ENCODE measurements at regions of chr10 and their contacts with region 1.

Region 1: DNA sequence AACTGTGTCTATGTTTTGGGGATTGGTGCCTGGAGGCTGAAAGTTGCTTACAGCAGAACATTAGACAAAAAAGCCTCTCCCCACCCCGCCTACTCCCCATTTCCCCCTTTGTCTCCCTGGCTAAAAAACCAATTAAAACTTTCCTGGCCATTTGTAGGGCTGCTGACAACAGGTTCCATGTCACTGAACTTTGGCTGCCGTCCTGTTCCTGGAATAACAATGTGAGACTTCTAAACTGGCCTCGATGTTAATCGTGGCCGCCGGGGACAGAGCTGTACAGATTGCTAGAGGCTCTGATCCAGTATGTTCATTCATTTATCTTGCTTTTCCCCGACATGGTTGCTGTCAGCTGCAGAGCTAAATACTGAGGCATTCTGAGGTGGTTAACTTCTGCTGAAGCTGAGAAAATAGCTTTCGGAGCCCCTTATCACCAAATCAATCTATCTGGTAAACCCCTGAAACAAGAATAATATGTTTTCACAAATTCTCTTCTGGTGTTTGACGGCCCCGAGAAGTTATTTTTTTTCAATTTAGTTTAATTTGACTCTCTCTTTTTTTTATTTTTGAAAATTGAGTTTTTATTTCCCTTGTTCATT is 271.6 kb downstream of the GFRA1 start:
- DNase-seq: peak in 1 of 2 donors; percentile 21
- H3K4me3 ChIP-seq: no peak overlapping the region
- H3K27ac ChIP-seq: no peak overlapping the region
- H3K4me1 ChIP-seq: no peaks in the 10 kb centered on the region
- H3K27me3 ChIP-seq: no peaks in the 10 kb centered on the region
- CTCF ChIP-seq: no peak
- POLR2A ChIP-seq: no peak

Region 2: GRCh38 chr10:115981081-115981480 is 20.3 kb before region 1 on chr10:
- intact Hi-C with region 1: loop called (anchors 1 kb)
- DNase-seq: no peak
- H3K4me3 ChIP-seq: no peak overlapping the region
- H3K27ac ChIP-seq: no peak overlapping the region
- H3K4me1 ChIP-seq: no peaks in the 10 kb centered on the region
- H3K27me3 ChIP-seq: no peaks in the 10 kb centered on the region
- CTCF ChIP-seq: no peak
- POLR2A ChIP-seq: no peak

Measured in breast epithelium (tissue), 4 donors.